H1 (cell line): ENCODE measurements at regions of chr2 and their contacts with region 1.

Region 1: DNA sequence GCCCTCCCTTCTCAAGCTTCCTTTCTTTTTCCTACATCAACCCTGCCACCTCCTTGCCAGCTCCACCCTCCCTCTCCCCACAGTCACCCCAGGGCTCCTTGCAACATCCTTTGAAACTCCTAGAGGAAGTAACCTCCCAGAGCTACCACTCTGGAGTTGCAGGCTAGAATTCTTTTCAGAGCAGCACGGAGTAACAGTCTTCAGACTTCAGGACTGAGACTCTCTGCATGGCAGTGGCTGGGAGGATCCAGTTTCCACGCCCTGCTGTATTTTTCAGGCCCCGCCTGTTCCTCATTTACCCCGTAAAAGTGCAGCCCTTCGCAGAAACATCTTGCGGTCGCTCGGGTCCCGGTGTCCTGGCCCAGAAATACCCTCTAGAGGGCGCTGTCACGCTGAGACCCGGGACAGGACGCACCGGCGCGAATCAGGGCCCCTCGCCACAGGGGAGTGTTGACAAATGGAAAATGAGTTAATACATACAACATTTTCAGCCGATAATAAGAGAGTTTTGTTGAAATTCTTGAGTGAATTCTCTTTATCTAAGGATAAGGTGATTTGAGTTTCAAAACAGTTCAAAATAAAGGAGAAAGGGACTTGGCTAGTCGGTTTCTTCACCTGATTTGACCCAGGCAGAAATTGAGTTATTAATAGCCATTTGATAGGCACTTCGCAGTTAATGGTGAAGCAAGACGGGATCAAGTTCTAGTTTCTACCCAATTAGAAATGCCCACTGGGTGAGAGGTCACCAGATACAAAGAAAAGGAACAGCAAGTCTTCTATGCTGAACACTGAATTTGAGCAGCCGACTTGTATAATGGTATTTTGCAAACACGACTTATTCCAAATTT is 18.5 kb upstream of the NTSR2 start:
- DNase-seq: peak in 1 of 2 experiments; percentile 94
- H3K4me3 ChIP-seq: peak overlapping the region in 3 of 4 experiments; percentile 25 to 49 (median 36); a peak in 5 of 8 replicates
- H3K27ac ChIP-seq: no peak overlapping the region
- H3K4me1 ChIP-seq: peaks cover 0 to 3% (median 0%) of the 10 kb centered on the region in 4 experiments; a peak in 2 of 7 replicates
- H3K27me3 ChIP-seq: peaks cover 0 to 2% (median 0%) of the 10 kb centered on the region in 4 experiments; a peak in 1 of 7 replicates
- CTCF ChIP-seq: peak; percentile 80 to 88 (median 82)
- EP300 ChIP-seq: no peak
- POLR2A ChIP-seq: no peak
- RAD21 ChIP-seq: peak; percentile 69 to 79

Region 2: DNA sequence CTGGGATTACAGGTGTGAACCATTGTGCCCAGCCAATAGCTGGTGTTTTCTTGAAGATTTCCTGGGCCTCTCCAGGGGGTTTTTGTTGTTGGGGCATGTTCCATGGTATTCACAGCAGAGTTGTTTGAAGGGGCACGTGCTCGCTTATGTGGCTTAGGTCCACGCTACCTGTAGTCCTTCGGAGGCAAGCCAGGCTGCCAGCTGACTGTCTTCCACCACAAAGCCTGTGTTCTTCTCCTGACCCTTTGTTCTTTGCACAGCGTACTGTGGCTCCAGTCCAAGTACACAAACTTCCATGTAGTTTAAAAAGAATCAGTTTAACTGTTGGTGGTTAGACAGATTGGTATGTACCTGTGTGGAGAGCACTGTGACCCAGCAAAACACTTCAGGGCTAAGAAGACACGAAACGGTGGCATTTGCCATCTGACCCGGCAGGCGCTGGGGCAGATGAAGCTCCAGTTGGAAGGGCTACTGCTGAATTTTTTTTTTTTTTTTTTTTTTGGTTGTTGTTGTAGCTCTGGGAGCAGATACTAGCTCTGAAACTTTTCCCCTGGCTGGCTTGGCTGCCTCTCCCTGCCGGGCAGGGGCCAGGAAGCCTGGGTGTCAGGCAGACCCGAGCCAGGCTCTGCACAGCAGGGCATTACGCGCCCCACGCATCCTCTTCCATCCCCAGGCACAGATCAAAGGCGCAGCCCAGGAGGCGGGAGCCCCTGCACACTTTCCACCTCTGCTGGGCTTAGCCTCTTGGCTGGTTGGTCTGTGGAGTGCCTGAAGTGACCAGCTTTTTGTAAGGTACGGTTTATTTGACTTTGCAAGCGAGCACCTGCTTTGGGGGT is 148.9 kb before region 1 on chr2:
- CTCF ChIA-PET with region 1: no interaction called
- POLR2A ChIA-PET with region 1: no interaction called
- DNase-seq: no peak
- H3K4me3 ChIP-seq: no peak overlapping the region
- H3K27ac ChIP-seq: no peak overlapping the region
- H3K4me1 ChIP-seq: peaks cover 13 to 38% (median 28%) of the 10 kb centered on the region in 4 experiments
- H3K27me3 ChIP-seq: no peaks in the 10 kb centered on the region
- CTCF ChIP-seq: no peak
- EP300 ChIP-seq: no peak
- POLR2A ChIP-seq: no peak
- RAD21 ChIP-seq: no peak

Region 3: DNA sequence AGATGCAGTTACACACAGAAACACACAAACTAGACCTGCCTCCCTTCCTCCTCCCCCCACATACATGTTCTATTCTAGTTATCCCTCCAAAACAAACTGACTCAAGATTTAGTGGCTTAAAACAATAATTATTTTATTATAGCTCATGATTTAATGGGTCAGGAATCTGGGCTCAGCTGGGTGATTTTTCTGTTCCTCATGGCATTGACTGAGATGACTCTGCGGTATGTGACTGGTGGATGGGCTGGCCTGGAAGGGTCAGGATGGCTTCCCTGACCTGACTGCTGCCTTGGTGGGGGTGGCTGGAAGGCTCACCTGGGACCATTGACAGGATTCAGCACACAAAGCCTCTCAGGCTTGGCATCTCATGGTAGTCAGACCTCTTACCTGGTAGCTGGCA is 15.3 kb after region 1 on chr2:
- CTCF ChIA-PET with region 1: interaction called, 91 read pairs
- POLR2A ChIA-PET with region 1: interaction called, 3 read pairs
- DNase-seq: no peak
- H3K4me3 ChIP-seq: no peak overlapping the region
- H3K27ac ChIP-seq: no peak overlapping the region
- H3K4me1 ChIP-seq: no peaks in the 10 kb centered on the region
- H3K27me3 ChIP-seq: no peaks in the 10 kb centered on the region
- CTCF ChIP-seq: no peak
- EP300 ChIP-seq: no peak
- POLR2A ChIP-seq: no peak
- RAD21 ChIP-seq: no peak

Region 4: GRCh38 chr2:11738589-11739436 is 50.4 kb after region 1 on chr2:
- CTCF ChIA-PET with region 1: interaction called, 25 read pairs
- POLR2A ChIA-PET with region 1: no interaction called
- DNase-seq: no peak
- H3K4me3 ChIP-seq: no peak overlapping the region
- H3K27ac ChIP-seq: no peak overlapping the region
- H3K4me1 ChIP-seq: peaks cover 0 to 10% (median 5%) of the 10 kb centered on the region in 4 experiments; a peak in 5 of 7 replicates
- H3K27me3 ChIP-seq: no peaks in the 10 kb centered on the region; a peak in 1 of 7 replicates
- CTCF ChIP-seq: peak; percentile 75 to 86 (median 82)
- EP300 ChIP-seq: no peak
- POLR2A ChIP-seq: no peak
- RAD21 ChIP-seq: peak; percentile 78 to 86

Region 5: DNA sequence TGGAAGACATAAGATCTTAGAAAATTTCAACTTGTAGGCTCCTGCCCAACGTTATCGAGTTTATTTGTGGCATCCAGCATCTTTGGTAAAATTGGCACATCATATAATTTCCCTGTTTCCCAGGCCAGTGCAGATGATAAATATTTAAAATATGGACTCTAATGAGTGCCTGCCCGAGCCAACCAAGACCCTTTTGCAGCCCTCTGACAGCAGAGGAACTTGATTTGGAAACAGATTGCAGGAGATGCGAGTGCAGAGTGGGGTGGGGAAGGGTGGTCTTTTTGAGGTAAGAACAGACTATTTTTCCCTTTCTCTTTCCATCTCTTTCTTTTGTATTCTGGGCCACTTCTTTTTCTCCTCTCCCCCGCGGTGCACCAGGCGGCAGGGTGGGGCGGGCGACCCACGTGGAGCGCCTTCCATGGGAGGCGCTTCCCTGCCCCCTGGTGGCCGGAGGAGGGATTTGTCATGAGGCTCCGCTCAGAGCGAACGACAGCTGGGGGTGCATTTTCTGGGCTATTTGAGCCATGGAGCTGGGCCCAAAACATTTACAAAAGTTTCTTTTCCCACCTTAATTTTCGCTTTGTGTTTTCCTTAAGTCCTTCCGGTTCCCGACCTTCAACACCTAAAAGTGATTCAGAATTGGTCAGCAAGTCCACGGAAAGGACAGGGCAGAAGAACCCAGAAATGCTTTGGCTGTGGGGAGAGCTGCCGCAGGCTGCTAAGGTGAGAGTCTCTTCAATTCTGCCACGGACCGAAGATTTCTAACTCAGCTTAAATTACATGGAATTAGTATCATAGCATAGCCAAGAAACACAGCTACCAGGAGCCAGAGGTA is 90.7 kb after region 1 on chr2:
- CTCF ChIA-PET with region 1: interaction called, 81 read pairs
- POLR2A ChIA-PET with region 1: no interaction called
- DNase-seq: peak; percentile 19 to 95
- H3K4me3 ChIP-seq: no peak overlapping the region
- H3K27ac ChIP-seq: no peak overlapping the region
- H3K4me1 ChIP-seq: peaks cover 0 to 3% (median 1%) of the 10 kb centered on the region in 4 experiments; a peak in 3 of 7 replicates
- H3K27me3 ChIP-seq: no peaks in the 10 kb centered on the region; a peak in 1 of 7 replicates
- CTCF ChIP-seq: peak; percentile 81 to 95 (median 89)
- EP300 ChIP-seq: no peak
- POLR2A ChIP-seq: no peak
- RAD21 ChIP-seq: peak; percentile 92 to 93